CD14-positive monocyte (primary cell): ENCODE measurements at regions of chr5 and their contacts with region 1.

Region 1: DNA sequence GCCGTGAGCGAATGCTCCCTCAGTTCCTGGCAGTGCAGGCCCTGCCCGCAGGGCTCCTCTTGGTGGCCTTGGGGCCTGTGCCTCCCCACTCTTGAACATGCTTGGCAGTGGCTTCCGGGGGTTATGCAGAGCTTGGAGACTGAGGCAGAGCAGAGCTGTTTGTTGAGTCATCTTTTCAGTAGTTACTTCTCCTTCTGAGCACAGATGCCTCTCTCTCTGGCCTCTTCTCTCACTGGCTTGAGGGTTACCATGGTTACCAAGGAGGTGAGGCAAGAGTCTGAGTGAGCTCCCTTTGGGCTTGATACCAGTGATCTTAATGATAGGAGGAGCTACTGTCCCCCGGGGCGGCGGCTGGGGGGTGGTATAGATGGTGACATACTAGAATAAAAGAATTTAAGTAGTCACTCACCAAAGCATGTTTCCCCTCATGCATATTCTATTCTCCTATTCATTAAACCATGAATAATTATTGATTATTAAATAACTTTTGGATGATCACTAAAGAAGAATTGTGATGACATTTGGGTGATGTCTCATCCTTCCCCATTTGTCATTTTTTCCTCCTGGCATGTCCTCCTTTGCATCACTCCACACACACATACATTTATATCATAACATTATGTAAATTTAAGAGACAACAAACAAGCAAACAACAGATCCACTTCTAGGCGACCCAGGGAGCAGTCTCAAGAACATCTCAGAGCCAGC is 111.1 kb downstream of the ARHGAP26 start:
- DNase-seq: peak; percentile 90 to 98 (median 97)
- H3K4me3 ChIP-seq: peak overlapping the region in 1 of 3 experiments; percentile 35
- H3K4me3 Mint-ChIP-seq: peak overlapping the region in 1 of 2 donors; percentile 21
- H3K27ac ChIP-seq: peak overlapping the region; percentile 64 to 80
- H3K27ac Mint-ChIP-seq: peak overlapping the region; percentile 81 to 95 (median 93)
- H3K4me1 ChIP-seq: peaks cover 15 to 17% of the 10 kb centered on the region in 2 donors
- H3K4me1 Mint-ChIP-seq: peaks cover 23% of the 10 kb centered on the region
- H3K27me3 ChIP-seq: no peaks in the 10 kb centered on the region
- H3K27me3 Mint-ChIP-seq: peaks cover 0 to 2% (median 0%) of the 10 kb centered on the region in 3 donors
- CTCF ChIP-seq: no peak

Region 2: GRCh38 chr5:142716963-142717362 is 164.3 kb before region 1 on chr5:
- intact Hi-C with region 1: loop called (anchors 2 to 5 kb)
- DNase-seq: peak; percentile 32 to 47 (median 38)
- H3K4me3 ChIP-seq: no peak overlapping the region
- H3K4me3 Mint-ChIP-seq: no peak overlapping the region
- H3K27ac ChIP-seq: no peak overlapping the region
- H3K27ac Mint-ChIP-seq: no peak overlapping the region
- H3K4me1 ChIP-seq: peaks cover 6 to 17% of the 10 kb centered on the region in 2 donors
- H3K4me1 Mint-ChIP-seq: peaks cover 17% of the 10 kb centered on the region
- H3K27me3 ChIP-seq: no peaks in the 10 kb centered on the region
- H3K27me3 Mint-ChIP-seq: peaks cover 0 to 2% (median 2%) of the 10 kb centered on the region in 3 donors
- CTCF ChIP-seq: no peak

Region 3: DNA sequence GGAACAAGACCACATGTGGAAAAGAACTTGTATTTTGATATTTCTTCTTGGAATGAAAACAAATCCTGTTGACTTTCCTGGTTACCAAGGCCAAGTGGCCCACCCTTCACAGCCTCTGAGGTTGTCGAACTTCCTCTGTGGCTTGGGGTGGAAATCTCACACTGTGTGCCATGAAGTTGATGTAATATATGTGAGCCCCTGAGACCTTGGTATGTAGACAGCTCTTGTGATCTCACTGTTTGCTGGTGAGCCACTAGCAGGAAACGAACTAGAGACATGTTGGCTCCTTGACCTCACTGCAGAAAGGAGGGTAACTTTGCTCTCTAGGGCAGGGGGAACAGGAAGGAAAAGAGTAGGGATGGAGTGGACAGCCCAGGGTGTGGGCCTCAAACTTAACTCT is 48.4 kb after region 1 on chr5:
- intact Hi-C with region 1: no loop called
- DNase-seq: peak in 1 of 3 donors; percentile 15
- H3K4me3 ChIP-seq: no peak overlapping the region
- H3K4me3 Mint-ChIP-seq: no peak overlapping the region
- H3K27ac ChIP-seq: peak overlapping the region in 1 of 2 donors; percentile 54
- H3K27ac Mint-ChIP-seq: peak overlapping the region in 6 of 7 donors; percentile 25 to 89 (median 59)
- H3K4me1 ChIP-seq: peaks cover 29 to 33% of the 10 kb centered on the region in 2 donors
- H3K4me1 Mint-ChIP-seq: peaks cover 42% of the 10 kb centered on the region
- H3K27me3 ChIP-seq: no peaks in the 10 kb centered on the region
- H3K27me3 Mint-ChIP-seq: peaks cover 0 to 5% (median 4%) of the 10 kb centered on the region in 3 donors
- CTCF ChIP-seq: no peak